CD4-positive, alpha-beta memory T cell (primary cell): ENCODE measurements at regions of chr9 and their contacts with region 1.

Region 1: GRCh38 chr9:81028504-81028903 is 660.8 kb downstream of the TLE1 start:
- DNase-seq: no peak
- H3K4me3 ChIP-seq: no peak overlapping the region
- H3K4me3 Mint-ChIP-seq: no peak overlapping the region
- H3K27ac ChIP-seq: no peak overlapping the region
- H3K27ac Mint-ChIP-seq: no peak overlapping the region
- H3K4me1 ChIP-seq: no peaks in the 10 kb centered on the region
- H3K4me1 Mint-ChIP-seq: no peaks in the 10 kb centered on the region
- H3K27me3 ChIP-seq: no peaks in the 10 kb centered on the region
- H3K27me3 Mint-ChIP-seq: no peaks in the 10 kb centered on the region

Region 2: GRCh38 chr9:80632041-80632440 is 396.5 kb before region 1 on chr9:
- CTCF ChIA-PET with region 1: no interaction called
- POLR2A ChIA-PET with region 1: no interaction called
- intact Hi-C with region 1: no loop called
- DNase-seq: no peak
- H3K4me3 ChIP-seq: no peak overlapping the region
- H3K4me3 Mint-ChIP-seq: no peak overlapping the region
- H3K27ac ChIP-seq: no peak overlapping the region
- H3K27ac Mint-ChIP-seq: no peak overlapping the region
- H3K4me1 ChIP-seq: no peaks in the 10 kb centered on the region
- H3K4me1 Mint-ChIP-seq: no peaks in the 10 kb centered on the region
- H3K27me3 ChIP-seq: no peaks in the 10 kb centered on the region
- H3K27me3 Mint-ChIP-seq: no peaks in the 10 kb centered on the region

Region 3: GRCh38 chr9:81045658-81046057 is 17.2 kb after region 1 on chr9:
- CTCF ChIA-PET with region 1: no interaction called
- POLR2A ChIA-PET with region 1: no interaction called
- intact Hi-C with region 1: loop called (anchors 1 kb)
- DNase-seq: no peak
- H3K4me3 ChIP-seq: no peak overlapping the region
- H3K4me3 Mint-ChIP-seq: no peak overlapping the region
- H3K27ac ChIP-seq: no peak overlapping the region
- H3K27ac Mint-ChIP-seq: no peak overlapping the region
- H3K4me1 ChIP-seq: no peaks in the 10 kb centered on the region
- H3K4me1 Mint-ChIP-seq: no peaks in the 10 kb centered on the region
- H3K27me3 ChIP-seq: no peaks in the 10 kb centered on the region
- H3K27me3 Mint-ChIP-seq: no peaks in the 10 kb centered on the region